BJ (cell line): ENCODE measurements at regions of chr11 and their contacts with region 1.

Region 1: GRCh38 chr11:45252134-45252855 is 33.8 kb downstream of the SYT13 start:
- DNase-seq: no peak
- H3K4me3 ChIP-seq: no peak overlapping the region
- H3K27me3 ChIP-seq: peaks cover 1% of the 10 kb centered on the region; the same call in 1 of the 2 replicates
- CTCF ChIP-seq: peak; percentile 60

Region 2: GRCh38 chr11:45158198-45158731 is 94.0 kb before region 1 on chr11:
- CTCF ChIA-PET with region 1: no interaction called
- POLR2A ChIA-PET with region 1: no interaction called
- DNase-seq: no peak
- H3K4me3 ChIP-seq: no peak overlapping the region
- H3K27me3 ChIP-seq: no peaks in the 10 kb centered on the region
- CTCF ChIP-seq: no peak

Region 3: GRCh38 chr11:45233121-45233803 is 19.0 kb before region 1 on chr11:
- CTCF ChIA-PET with region 1: interaction called, 26 read pairs
- POLR2A ChIA-PET with region 1: no interaction called
- DNase-seq: no peak
- H3K4me3 ChIP-seq: no peak overlapping the region
- H3K27me3 ChIP-seq: peaks cover 3% of the 10 kb centered on the region
- CTCF ChIP-seq: peak; percentile 87

Region 4: GRCh38 chr11:45238724-45239123 is 13.6 kb before region 1 on chr11:
- CTCF ChIA-PET with region 1: interaction called, 26 read pairs
- POLR2A ChIA-PET with region 1: no interaction called
- DNase-seq: no peak
- H3K4me3 ChIP-seq: no peak overlapping the region
- H3K27me3 ChIP-seq: no peaks in the 10 kb centered on the region; the same call in 1 of the 2 replicates
- CTCF ChIP-seq: no peak